ENCODE measurements at regions of chr6 and their contacts with region 1.

Region 1: DNA sequence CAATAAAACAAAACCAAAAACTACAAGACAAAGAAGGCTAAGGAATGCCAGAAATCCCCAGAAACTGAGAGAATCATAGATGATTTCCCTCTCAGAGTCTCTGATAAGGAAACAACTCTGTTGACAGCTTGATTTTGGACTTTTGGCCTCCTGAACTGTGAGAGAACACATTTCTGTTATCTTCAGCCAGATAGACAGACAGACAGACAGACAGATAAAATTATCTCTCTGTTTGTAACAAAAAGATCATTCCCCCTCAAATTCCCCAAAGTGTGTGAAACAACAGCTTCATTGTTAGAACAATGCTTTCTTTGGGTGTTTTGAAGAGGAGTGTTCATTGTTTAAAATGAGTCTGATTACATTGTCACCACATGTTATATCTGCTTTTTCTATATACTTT is 148.2 kb downstream of the BCKDHB start:
- DNase-seq: no peak
- H3K4me3 ChIP-seq: no peak overlapping the region
- H3K27ac ChIP-seq: no peak overlapping the region
- H3K4me1 ChIP-seq: no peaks in the 10 kb centered on the region
- H3K27me3 ChIP-seq: no peaks in the 10 kb centered on the region
- CTCF ChIP-seq: no peak
- POLR2A ChIP-seq: no peak

Region 2: DNA sequence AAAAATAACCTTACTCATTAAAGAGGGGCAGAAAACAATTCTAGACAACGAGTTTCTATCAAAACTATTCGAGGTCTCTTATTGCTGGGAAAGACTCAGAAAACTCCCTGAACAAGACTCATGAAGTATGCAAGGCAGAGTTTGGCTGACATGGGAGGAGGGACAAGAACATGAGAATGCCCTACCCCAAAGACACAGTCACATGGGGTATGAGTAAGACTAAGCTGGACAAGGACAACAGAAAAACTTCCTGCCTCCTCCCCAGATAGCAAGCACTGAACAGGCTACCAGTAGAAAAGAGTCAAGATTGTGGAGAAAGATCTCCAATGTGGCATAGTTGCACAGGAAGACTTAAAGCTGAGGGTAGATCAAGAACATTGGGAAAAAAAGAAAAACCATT is 1137.0 kb before region 1 on chr6:
- intact Hi-C with region 1: no loop called
- DNase-seq: no peak
- H3K4me3 ChIP-seq: no peak overlapping the region
- H3K27ac ChIP-seq: no peak overlapping the region
- H3K4me1 ChIP-seq: no peaks in the 10 kb centered on the region
- H3K27me3 ChIP-seq: no peaks in the 10 kb centered on the region
- CTCF ChIP-seq: no peak
- POLR2A ChIP-seq: no peak

Region 3: GRCh38 chr6:80223743-80224212 is 30.9 kb before region 1 on chr6:
- intact Hi-C with region 1: no loop called
- DNase-seq: no peak
- H3K4me3 ChIP-seq: no peak overlapping the region
- H3K27ac ChIP-seq: no peak overlapping the region
- H3K4me1 ChIP-seq: no peaks in the 10 kb centered on the region
- H3K27me3 ChIP-seq: no peaks in the 10 kb centered on the region
- CTCF ChIP-seq: no peak
- POLR2A ChIP-seq: no peak

Region 4: DNA sequence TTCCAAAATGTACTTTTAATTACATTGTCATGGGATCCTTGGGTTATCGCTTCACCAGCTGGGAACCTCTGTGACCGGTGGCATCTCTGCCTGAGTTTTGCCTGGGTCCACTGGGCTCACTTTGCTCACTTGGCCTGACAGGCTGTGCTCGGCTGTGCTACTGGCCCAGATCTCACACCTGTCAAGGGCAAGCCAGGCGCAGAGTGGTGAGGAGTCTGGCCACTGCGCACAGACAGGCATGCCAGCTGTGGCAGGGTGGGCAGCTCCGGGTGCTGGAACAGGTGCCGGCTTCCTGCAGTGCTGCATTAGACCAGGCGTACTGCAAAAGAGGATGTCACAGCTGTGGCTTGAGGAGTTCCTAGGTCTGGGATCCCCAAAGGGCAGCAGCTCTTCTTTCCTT is 1007.9 kb after region 1 on chr6:
- intact Hi-C with region 1: loop called (anchors 5 kb)
- DNase-seq: no peak
- H3K4me3 ChIP-seq: no peak overlapping the region
- H3K27ac ChIP-seq: no peak overlapping the region
- H3K4me1 ChIP-seq: no peaks in the 10 kb centered on the region
- H3K27me3 ChIP-seq: no peaks in the 10 kb centered on the region
- CTCF ChIP-seq: no peak
- POLR2A ChIP-seq: no peak